Naive thymus-derived CD4-positive, alpha-beta T cell (primary cell): ENCODE measurements at regions of chrX and their contacts with region 1.

Region 1: DNA sequence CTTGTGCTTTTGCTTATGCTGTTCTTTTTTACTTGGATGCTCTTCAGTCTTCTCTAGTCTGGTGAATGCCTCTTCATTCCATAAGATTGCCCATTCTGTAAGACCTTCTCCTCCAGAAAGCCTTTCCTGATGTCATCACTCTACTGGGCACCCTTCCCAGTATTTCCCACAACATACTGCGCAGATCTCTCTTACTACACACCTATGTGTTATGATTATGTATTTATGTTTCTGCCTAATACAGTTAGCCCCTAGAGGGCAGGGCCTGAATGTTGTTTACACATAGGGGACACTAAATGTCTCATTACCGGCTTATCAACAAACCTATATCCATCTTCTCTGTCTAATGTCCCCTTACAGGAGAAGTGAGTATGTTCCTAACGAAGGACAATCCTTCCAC is 21.1 kb downstream of the AIFM1 start:
- DNase-seq: no peak
- ATAC-seq: no peak
- H3K4me3 ChIP-seq: no peak overlapping the region
- H3K4me3 Mint-ChIP-seq: no peak overlapping the region
- H3K27ac ChIP-seq: no peak overlapping the region
- H3K27ac Mint-ChIP-seq: peak overlapping the region in 2 of 9 donors; percentile 7 to 28
- H3K4me1 ChIP-seq: no peaks in the 10 kb centered on the region
- H3K4me1 Mint-ChIP-seq: peaks cover 0 to 6% (median 0%) of the 10 kb centered on the region in 7 donors
- H3K27me3 ChIP-seq: no peaks in the 10 kb centered on the region
- H3K27me3 Mint-ChIP-seq: no peaks in the 10 kb centered on the region

Region 2: GRCh38 chrX:130186651-130187050 is 42.1 kb after region 1 on chrX:
- CTCF ChIA-PET with region 1: no interaction called
- POLR2A ChIA-PET with region 1: interaction called, 3 read pairs
- intact Hi-C with region 1: loop called in 1 of 2 experiments (anchors 5 kb)
- DNase-seq: no peak
- ATAC-seq: no peak
- H3K4me3 ChIP-seq: no peak overlapping the region
- H3K4me3 Mint-ChIP-seq: no peak overlapping the region
- H3K27ac ChIP-seq: no peak overlapping the region
- H3K27ac Mint-ChIP-seq: peak overlapping the region in 1 of 9 donors; percentile 43
- H3K4me1 ChIP-seq: peaks cover 6 to 13% of the 10 kb centered on the region in 2 donors
- H3K4me1 Mint-ChIP-seq: peaks cover 3 to 26% (median 13%) of the 10 kb centered on the region in 7 donors
- H3K27me3 ChIP-seq: no peaks in the 10 kb centered on the region
- H3K27me3 Mint-ChIP-seq: no peaks in the 10 kb centered on the region

Region 3: DNA sequence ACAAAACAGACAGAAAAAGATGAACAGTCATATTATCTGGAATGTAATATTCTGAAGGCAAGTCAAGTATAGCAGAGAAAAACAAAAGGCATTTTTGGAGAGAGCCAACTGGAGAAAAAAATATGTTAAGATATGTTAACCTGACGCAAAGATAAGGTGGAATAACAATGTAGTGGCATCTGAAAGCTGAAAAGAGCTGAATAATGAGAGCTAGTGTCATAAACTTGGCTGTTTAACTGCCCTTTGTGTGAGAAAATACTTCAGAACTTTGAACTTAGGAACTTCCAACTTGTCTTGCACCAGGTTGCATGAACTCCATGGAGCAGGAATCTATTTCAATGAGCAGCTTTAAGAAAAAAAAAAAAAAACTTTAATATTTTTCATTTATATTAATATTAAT is 60.1 kb after region 1 on chrX:
- CTCF ChIA-PET with region 1: no interaction called
- POLR2A ChIA-PET with region 1: no interaction called
- intact Hi-C with region 1: no loop called
- DNase-seq: no peak
- ATAC-seq: no peak
- H3K4me3 ChIP-seq: no peak overlapping the region
- H3K4me3 Mint-ChIP-seq: no peak overlapping the region
- H3K27ac ChIP-seq: no peak overlapping the region
- H3K27ac Mint-ChIP-seq: no peak overlapping the region
- H3K4me1 ChIP-seq: no peaks in the 10 kb centered on the region
- H3K4me1 Mint-ChIP-seq: no peaks in the 10 kb centered on the region
- H3K27me3 ChIP-seq: no peaks in the 10 kb centered on the region
- H3K27me3 Mint-ChIP-seq: no peaks in the 10 kb centered on the region